Activated CD4-positive, alpha-beta T cell treated with anti-CD3 and anti-CD28 coated beads, Interleukin-2, amount 10 ng/mL, durations not matched to agents 24 days and 14 days (primary cell): ENCODE measurements at regions of chr2 and their contacts with region 1.

Region 1: GRCh38 chr2:183214680-183215079 is 90.4 kb downstream of the NUP35 start:
- DNase-seq: no peak
- H3K4me3 Mint-ChIP-seq: no peak overlapping the region
- H3K27ac Mint-ChIP-seq: no peak overlapping the region
- H3K4me1 Mint-ChIP-seq: peaks cover 5% of the 10 kb centered on the region
- H3K27me3 Mint-ChIP-seq: no peaks in the 10 kb centered on the region

Region 2: DNA sequence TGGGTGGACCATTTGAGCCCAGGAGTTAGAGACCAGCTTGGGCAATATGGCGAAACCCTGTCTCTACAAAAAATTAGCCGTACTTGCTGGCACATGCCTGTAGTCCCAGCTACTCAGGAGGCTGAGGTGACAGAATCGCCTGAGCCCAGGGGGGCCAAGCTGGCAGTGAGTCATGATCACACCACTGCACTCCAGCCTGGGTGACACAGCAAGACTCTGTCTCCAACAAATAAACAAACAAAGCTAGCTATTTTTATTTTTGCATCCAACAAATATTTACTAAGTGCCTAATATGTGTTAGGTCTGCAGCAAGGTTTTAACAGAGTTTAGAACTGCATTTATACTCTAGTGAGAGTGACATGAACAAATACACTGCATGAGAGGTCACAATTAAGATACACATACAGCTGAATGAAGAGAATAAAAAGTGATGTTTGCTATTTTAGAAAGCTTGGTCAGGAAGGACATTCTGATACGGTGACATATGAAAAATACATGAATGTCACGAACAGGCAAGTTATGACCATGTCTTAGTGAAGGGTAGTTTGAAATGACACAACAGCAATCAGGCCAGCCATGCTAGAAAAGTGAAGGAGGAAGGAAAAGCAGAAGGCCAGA is 265.0 kb before region 1 on chr2:
- intact Hi-C with region 1: loop called (anchors 10 kb)
- DNase-seq: no peak
- H3K4me3 Mint-ChIP-seq: no peak overlapping the region
- H3K27ac Mint-ChIP-seq: no peak overlapping the region
- H3K4me1 Mint-ChIP-seq: peaks cover 37% of the 10 kb centered on the region
- H3K27me3 Mint-ChIP-seq: no peaks in the 10 kb centered on the region

Region 3: DNA sequence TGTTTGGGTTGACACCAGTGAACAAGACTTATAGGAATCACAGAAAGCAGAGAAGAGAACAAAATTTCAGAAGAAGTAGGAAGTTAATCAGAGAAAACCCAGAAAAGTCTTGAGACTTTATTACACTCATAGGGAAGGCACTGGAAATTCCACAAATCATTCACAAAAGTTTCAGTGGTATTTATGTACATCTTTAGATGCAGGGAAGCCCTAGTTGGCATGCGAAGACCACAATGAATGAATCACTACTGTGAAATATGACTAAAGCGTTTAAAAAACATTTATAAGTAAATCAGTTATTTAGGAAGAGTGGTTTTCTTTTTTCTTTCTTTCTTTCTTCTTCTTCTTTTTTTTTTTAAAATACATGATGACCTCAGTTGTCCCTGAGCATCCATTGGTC is 14.7 kb after region 1 on chr2:
- intact Hi-C with region 1: loop called (anchors 1 kb)
- DNase-seq: no peak
- H3K4me3 Mint-ChIP-seq: no peak overlapping the region
- H3K27ac Mint-ChIP-seq: peak overlapping the region; percentile 72
- H3K4me1 Mint-ChIP-seq: peaks cover 5% of the 10 kb centered on the region
- H3K27me3 Mint-ChIP-seq: no peaks in the 10 kb centered on the region